ENCODE measurements at regions of chr5 and their contacts with region 1.

Region 1: GRCh38 chr5:121867401-121867800 is 15.7 kb downstream of the FTMT start:
- DNase-seq: no peak
- ATAC-seq: no peak
- H3K4me3 ChIP-seq: no peak overlapping the region
- H3K27ac ChIP-seq: no peak overlapping the region
- H3K4me1 ChIP-seq: no peaks in the 10 kb centered on the region
- H3K27me3 ChIP-seq: no peaks in the 10 kb centered on the region
- CTCF ChIP-seq: no peak
- POLR2A ChIP-seq: no peak

Region 2: DNA sequence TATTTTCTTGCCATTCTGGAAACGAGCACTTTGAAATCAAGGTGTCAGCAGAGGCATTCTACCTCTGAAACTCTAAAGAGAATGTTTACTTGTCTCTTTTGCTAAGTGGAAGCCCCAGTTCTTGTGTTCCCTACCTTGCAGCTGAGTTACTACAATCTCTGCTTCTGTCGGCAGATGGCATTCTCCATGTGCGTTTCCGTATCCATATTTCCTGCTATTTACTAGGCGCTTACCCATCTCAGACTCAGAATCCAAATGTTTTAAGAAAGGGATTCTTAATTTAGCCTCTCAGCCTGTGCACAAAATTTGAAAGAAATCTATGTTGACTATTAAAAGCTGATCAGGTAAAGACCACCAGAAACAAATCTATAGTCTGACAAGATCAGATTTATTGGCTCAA is 237.0 kb before region 1 on chr5:
- in situ Hi-C with region 1: no loop called
- intact Hi-C with region 1: loop called (anchors 5 kb)
- DNase-seq: no peak
- ATAC-seq: no peak
- H3K4me3 ChIP-seq: no peak overlapping the region
- H3K27ac ChIP-seq: no peak overlapping the region
- H3K4me1 ChIP-seq: no peaks in the 10 kb centered on the region
- H3K27me3 ChIP-seq: no peaks in the 10 kb centered on the region
- CTCF ChIP-seq: no peak
- POLR2A ChIP-seq: no peak

Region 3: DNA sequence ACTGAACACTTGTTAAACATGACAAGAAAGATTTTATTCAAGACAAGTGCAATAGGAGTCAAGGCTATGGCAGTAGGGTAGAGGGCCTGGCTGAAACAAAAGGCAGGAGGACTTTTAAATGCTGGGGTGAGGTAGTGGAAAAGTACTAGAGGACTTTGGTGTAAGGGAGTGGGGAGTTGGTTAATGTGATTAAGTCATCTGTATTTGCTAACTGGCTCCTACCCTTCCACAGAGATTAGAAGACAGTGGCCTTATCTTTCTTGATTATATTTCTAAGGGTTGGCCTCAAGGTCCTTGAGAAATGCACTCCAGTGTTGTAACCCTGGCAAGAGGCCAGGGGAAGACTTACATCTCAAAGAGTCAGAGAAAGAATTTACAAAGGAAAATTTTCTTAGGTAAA is 175.9 kb before region 1 on chr5:
- in situ Hi-C with region 1: no loop called
- intact Hi-C with region 1: no loop called
- DNase-seq: no peak
- ATAC-seq: no peak
- H3K4me3 ChIP-seq: no peak overlapping the region
- H3K27ac ChIP-seq: no peak overlapping the region
- H3K4me1 ChIP-seq: no peaks in the 10 kb centered on the region
- H3K27me3 ChIP-seq: no peaks in the 10 kb centered on the region
- CTCF ChIP-seq: no peak
- POLR2A ChIP-seq: no peak

Region 4: DNA sequence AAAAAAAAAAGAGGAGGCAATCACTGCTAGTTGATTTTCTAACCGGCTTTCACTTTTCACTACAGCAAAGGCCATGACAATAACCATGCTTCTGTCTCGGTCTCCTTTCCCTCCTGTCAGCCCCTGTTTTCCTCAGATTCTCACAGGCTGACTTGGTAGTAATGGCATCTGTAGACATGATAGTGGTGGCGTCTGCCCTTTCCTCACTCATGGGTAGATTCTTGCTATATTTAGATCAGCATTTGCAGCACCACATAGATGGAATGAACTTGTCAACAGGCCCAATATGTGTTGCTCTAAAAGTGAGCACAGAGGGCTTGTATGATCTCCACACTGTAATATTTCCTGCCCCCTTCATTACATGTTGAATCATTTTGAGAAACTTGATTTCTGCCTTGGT is 136.0 kb before region 1 on chr5:
- in situ Hi-C with region 1: no loop called
- intact Hi-C with region 1: no loop called
- DNase-seq: no peak
- ATAC-seq: no peak
- H3K4me3 ChIP-seq: no peak overlapping the region
- H3K27ac ChIP-seq: no peak overlapping the region
- H3K4me1 ChIP-seq: peaks cover 0 to 2% of the 10 kb centered on the region in 2 donors
- H3K27me3 ChIP-seq: no peaks in the 10 kb centered on the region
- CTCF ChIP-seq: no peak
- POLR2A ChIP-seq: no peak